ENCODE measurements at regions of chr6 and their contacts with region 1.

Region 1: DNA sequence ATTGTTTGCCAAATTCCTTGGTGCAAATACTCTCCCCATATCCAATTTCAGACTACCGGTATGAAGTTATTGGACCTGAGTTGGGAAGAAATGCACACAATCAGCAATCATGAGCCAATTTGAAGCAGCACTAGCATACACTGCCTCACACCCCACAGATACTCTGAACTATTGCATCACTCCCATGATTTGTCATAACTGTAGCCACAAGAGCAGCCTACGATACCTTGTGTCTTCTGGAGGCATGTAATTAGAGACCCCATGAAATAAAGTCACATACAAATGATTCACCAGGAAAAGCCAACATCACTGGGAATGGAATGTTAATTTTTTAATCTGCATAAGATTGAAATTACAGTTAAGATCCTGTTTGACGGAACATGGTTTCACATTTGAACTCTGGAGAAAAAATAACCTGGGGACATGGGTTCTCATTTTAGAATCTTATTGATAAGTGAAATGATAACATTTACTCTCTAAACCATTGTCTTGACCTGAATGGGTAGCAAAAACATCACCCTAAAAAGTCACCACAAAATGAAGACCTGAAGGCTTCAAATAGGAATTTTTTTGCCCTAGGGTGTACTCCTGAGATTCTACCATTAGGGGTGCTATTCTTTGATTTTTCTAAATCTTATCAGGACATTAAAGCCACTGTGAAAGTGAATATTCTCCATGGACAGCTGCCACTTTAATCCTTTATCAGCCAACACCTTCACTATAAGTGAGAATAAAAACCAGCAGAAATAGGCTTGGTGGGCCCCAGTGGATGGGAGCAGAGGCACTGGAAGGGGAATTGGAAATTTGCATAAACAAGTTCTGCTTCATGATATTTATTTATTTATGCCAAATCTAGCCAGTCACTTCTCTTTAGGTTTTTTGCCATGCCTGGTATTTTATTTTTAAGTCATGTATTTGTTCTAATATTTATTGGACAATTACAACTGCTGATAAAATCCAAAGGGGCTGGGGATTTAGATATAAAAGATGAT is 34.5 kb upstream of the HBS1L start:
- DNase-seq: no peak
- ATAC-seq: peak; percentile 86
- H3K4me3 Mint-ChIP-seq: peak overlapping the region; percentile 64
- H3K27ac Mint-ChIP-seq: no peak overlapping the region
- H3K4me1 Mint-ChIP-seq: peaks cover 34% of the 10 kb centered on the region
- H3K27me3 Mint-ChIP-seq: peaks cover 2% of the 10 kb centered on the region
- CTCF ChIP-seq: no peak

Region 2: GRCh38 chr6:135423649-135424128 is 334.6 kb after region 1 on chr6:
- CTCF ChIA-PET with region 1: interaction called, 3 read pairs
- POLR2A ChIA-PET with region 1: no interaction called
- intact Hi-C with region 1: loop called (anchors 5 kb)
- DNase-seq: no peak
- ATAC-seq: peak; percentile 60
- H3K4me3 Mint-ChIP-seq: no peak overlapping the region
- H3K27ac Mint-ChIP-seq: no peak overlapping the region
- H3K4me1 Mint-ChIP-seq: no peaks in the 10 kb centered on the region
- H3K27me3 Mint-ChIP-seq: no peaks in the 10 kb centered on the region
- CTCF ChIP-seq: no peak